ENCODE measurements at regions of chr2 and their contacts with region 1.

Region 1: GRCh38 chr2:61550375-61551209 is 12.4 kb upstream of the XPO1 start:
- DNase-seq: no peak
- H3K4me3 ChIP-seq: no peak overlapping the region
- H3K27ac ChIP-seq: no peak overlapping the region
- H3K4me1 ChIP-seq: no peaks in the 10 kb centered on the region
- H3K27me3 ChIP-seq: no peaks in the 10 kb centered on the region
- CTCF ChIP-seq: no peak

Region 2: DNA sequence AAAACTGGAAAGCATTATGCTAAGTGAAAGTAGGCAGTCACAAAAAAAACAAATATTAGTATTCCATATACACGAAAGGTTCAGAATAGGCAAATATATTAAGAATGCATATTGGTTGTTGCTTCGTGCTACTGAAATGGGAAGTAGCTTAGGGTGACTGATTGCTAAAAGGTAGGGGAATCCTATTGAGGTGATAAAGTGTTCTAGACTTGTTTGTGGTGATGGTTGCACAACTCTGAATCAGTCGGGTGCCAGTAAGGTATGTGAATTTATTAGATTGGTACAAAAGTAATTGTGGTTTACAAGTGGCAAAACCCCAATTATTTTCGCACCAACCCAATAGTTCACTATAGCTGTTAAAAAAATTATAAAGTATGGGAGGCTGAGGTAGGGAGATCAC is 100.4 kb before region 1 on chr2:
- dilution Hi-C with region 1: no loop called
- DNase-seq: no peak
- H3K4me3 ChIP-seq: no peak overlapping the region
- H3K27ac ChIP-seq: no peak overlapping the region
- H3K4me1 ChIP-seq: no peaks in the 10 kb centered on the region
- H3K27me3 ChIP-seq: no peaks in the 10 kb centered on the region
- CTCF ChIP-seq: no peak

Region 3: GRCh38 chr2:61639721-61640120 is 89.1 kb after region 1 on chr2:
- dilution Hi-C with region 1: loop called (anchors 5 kb)
- DNase-seq: no peak
- H3K4me3 ChIP-seq: no peak overlapping the region
- H3K27ac ChIP-seq: no peak overlapping the region
- H3K4me1 ChIP-seq: peaks cover 10% of the 10 kb centered on the region
- H3K27me3 ChIP-seq: no peaks in the 10 kb centered on the region
- CTCF ChIP-seq: no peak

Region 4: DNA sequence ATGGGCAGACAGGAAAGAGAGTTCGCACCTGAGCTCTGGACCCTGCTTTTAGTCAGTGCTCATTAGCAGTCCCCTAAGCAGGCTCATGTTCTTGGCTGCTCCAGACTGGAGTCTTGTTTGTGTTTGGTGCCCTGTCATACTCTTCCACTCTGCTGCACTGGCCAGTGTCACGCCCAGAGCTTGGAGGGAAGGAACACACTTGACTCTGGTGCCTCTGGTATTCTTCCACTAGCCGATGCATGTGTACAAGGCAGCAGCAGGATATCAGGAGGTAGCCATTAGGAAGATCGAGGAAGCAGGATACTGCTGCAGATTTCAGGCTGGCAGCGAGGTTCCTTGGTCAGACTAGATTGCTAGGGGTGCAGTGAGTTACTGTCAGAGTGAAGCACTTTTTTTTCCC is 564.0 kb after region 1 on chr2:
- dilution Hi-C with region 1: no loop called
- DNase-seq: no peak
- H3K4me3 ChIP-seq: no peak overlapping the region
- H3K27ac ChIP-seq: no peak overlapping the region
- H3K4me1 ChIP-seq: peaks cover 11% of the 10 kb centered on the region
- H3K27me3 ChIP-seq: no peaks in the 10 kb centered on the region
- CTCF ChIP-seq: no peak

Measured in keratinocyte (primary cell).